SK-N-SH (cell line): ENCODE measurements at regions of chr2 and their contacts with region 1.

Region 1: DNA sequence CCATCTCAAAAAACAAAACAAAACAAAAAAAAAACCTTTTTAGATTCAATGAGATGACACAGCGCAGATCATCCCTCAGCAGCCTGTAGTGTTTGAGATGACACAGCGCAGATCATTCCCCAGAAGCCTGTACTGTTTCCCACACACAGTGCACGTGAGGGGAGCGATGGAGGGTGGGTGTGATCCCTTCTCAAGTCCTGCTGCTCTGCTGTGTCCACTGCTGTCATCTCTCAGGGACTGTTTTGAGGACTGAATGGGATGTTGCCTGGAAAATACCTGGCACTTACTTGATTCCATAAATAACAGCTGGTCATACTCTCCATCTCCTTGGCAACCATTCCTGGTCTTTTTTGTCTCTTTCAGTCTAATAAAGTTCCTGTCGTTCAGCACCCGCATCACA is 25.7 kb downstream of the TGOLN2 start:
- DNase-seq: no peak
- H3K4me3 ChIP-seq: no peak overlapping the region
- H3K27ac ChIP-seq: no peak overlapping the region
- H3K4me1 ChIP-seq: peaks cover 0 to 2% of the 10 kb centered on the region in 2 experiments; a peak in 2 of 4 replicates
- H3K27me3 ChIP-seq: no peaks in the 10 kb centered on the region
- CTCF ChIP-seq: no peak
- EP300 ChIP-seq: no peak
- RAD21 ChIP-seq: no peak

Region 2: GRCh38 chr2:85017411-85018048 is 284.6 kb before region 1 on chr2:
- CTCF ChIA-PET with region 1: interaction called, 11 read pairs
- POLR2A ChIA-PET with region 1: interaction called, 3 read pairs
- DNase-seq: peak; percentile 21
- H3K4me3 ChIP-seq: no peak overlapping the region; a peak in 1 of 4 replicates
- H3K27ac ChIP-seq: peak overlapping the region; percentile 23 to 35; a peak in 3 of 4 replicates
- H3K4me1 ChIP-seq: peaks cover 0 to 52% of the 10 kb centered on the region in 2 experiments; a peak in 3 of 4 replicates
- H3K27me3 ChIP-seq: no peaks in the 10 kb centered on the region
- CTCF ChIP-seq: peak; percentile 68
- EP300 ChIP-seq: no peak
- RAD21 ChIP-seq: peak; percentile 25; the same call in 1 of the 2 replicates

Region 3: GRCh38 chr2:85119900-85120299 is 182.2 kb before region 1 on chr2:
- CTCF ChIA-PET with region 1: interaction called, 10 read pairs
- POLR2A ChIA-PET with region 1: no interaction called
- DNase-seq: no peak
- H3K4me3 ChIP-seq: no peak overlapping the region
- H3K27ac ChIP-seq: no peak overlapping the region
- H3K4me1 ChIP-seq: no peaks in the 10 kb centered on the region
- H3K27me3 ChIP-seq: no peaks in the 10 kb centered on the region
- CTCF ChIP-seq: no peak
- EP300 ChIP-seq: no peak
- RAD21 ChIP-seq: no peak

Region 4: DNA sequence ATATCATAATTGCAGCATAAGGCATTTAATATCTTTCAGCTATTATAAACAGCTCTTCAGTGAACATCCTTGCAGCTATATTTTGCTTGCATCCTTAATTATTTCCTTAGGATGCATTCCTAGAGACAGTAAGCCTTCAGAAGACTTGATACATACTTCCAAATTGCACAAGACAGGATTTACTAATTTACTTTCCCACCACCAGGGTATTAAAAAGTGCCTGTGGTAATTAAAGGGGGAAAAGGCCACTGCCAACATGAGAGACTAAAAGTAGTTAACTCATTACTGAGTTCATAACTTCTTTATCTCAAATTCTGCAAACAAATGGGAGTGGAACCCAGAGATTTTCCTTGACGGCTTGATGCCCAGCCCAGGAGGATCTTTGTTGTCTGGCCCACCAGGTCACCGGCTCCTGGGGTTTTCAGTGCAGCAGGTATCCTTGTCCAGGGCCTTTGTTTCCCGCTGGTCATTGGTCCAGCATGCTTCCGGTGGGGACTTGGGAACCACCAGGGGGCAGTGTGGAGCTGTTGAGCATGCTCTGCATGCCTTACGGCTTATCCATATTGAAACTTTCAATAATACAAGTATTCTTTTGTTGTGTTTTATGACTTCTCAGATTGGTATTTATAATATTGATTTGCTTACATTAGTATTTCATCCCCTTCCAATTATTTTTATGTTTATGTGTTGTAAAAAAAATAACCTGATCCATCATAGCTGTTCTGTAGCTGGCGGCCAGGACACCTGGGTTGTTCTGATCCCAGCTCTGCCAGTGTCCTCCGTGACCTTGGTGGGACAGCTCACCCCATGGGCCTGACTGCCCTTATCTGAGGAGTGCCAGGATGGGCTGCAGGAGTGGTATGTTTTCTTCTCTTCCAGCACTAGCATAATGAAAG is 35.7 kb before region 1 on chr2:
- CTCF ChIA-PET with region 1: interaction called, 18 read pairs
- POLR2A ChIA-PET with region 1: no interaction called
- DNase-seq: peak; percentile 72
- H3K4me3 ChIP-seq: peak overlapping the region in 1 of 2 experiments; percentile 39; a peak in 1 of 4 replicates
- H3K27ac ChIP-seq: no peak overlapping the region
- H3K4me1 ChIP-seq: peaks cover 9 to 22% of the 10 kb centered on the region in 2 experiments; a peak in 2 of 4 replicates
- H3K27me3 ChIP-seq: no peaks in the 10 kb centered on the region
- CTCF ChIP-seq: peak; percentile 95
- EP300 ChIP-seq: no peak
- RAD21 ChIP-seq: peak; percentile 70

Region 5: DNA sequence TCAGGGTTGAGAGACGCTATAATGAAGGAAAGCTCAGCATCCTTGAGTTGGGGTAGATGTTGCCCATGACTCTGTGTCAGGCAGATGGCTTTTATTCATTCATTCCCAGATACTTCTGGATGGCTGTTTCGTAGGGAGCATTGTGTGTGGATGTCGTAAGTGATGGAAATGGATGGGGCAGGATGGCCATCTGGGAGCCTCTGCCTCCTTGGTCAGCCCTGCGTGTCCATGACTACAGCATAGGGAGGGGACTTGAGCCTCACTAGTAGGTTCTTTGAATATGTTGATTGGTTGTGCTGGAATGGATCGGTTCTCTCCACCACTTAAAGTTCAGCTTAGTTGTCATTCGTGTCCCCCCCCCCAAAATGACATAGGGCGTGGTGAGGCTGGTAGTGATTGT is 19.2 kb before region 1 on chr2:
- CTCF ChIA-PET with region 1: interaction called, 109 read pairs
- POLR2A ChIA-PET with region 1: no interaction called
- DNase-seq: no peak
- H3K4me3 ChIP-seq: no peak overlapping the region
- H3K27ac ChIP-seq: no peak overlapping the region
- H3K4me1 ChIP-seq: peaks cover 11% of the 10 kb centered on the region in 2 experiments
- H3K27me3 ChIP-seq: no peaks in the 10 kb centered on the region
- CTCF ChIP-seq: no peak
- EP300 ChIP-seq: no peak
- RAD21 ChIP-seq: no peak

Region 6: GRCh38 chr2:85318222-85319074 is 16.3 kb after region 1 on chr2:
- CTCF ChIA-PET with region 1: interaction called, 17 read pairs
- POLR2A ChIA-PET with region 1: no interaction called
- DNase-seq: no peak
- H3K4me3 ChIP-seq: no peak overlapping the region
- H3K27ac ChIP-seq: no peak overlapping the region
- H3K4me1 ChIP-seq: peaks cover 0 to 2% of the 10 kb centered on the region in 2 experiments; a peak in 1 of 4 replicates
- H3K27me3 ChIP-seq: no peaks in the 10 kb centered on the region
- CTCF ChIP-seq: no peak
- EP300 ChIP-seq: no peak
- RAD21 ChIP-seq: no peak